ENCODE measurements at regions of chr2 and their contacts with region 1.

Region 1: DNA sequence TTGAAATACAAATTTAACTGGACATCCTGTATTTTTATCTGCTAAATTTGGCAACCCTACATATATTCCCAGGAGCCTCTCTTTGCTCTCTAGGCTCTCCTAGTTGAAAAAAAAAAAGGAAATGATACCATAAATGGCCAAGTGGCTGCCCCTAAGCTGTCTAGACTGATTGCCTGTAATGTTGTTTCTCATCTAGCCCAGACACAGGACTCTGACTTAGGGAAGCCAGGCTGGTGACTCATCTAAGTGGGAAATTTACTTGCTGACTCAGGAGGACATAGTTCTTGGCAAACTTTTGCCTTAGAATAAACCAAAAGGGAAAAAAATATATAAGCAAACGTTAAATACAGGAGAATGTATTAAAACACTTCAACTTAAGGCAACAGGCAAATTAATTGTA is 14.6 kb upstream of the ITGAV start:
- DNase-seq: peak; percentile 98
- H3K4me3 Mint-ChIP-seq: no peak overlapping the region
- H3K27ac Mint-ChIP-seq: peak overlapping the region; percentile 35
- H3K4me1 Mint-ChIP-seq: peaks cover 10% of the 10 kb centered on the region
- H3K27me3 Mint-ChIP-seq: no peaks in the 10 kb centered on the region
- CTCF ChIP-seq: no peak

Region 2: GRCh38 chr2:186429104-186429503 is 146.2 kb before region 1 on chr2:
- CTCF ChIA-PET with region 1: no interaction called
- POLR2A ChIA-PET with region 1: no interaction called
- intact Hi-C with region 1: no loop called
- DNase-seq: no peak
- H3K4me3 Mint-ChIP-seq: no peak overlapping the region
- H3K27ac Mint-ChIP-seq: no peak overlapping the region
- H3K4me1 Mint-ChIP-seq: peaks cover 10% of the 10 kb centered on the region
- H3K27me3 Mint-ChIP-seq: no peaks in the 10 kb centered on the region
- CTCF ChIP-seq: no peak

Region 3: GRCh38 chr2:186544255-186544675 is 31.0 kb before region 1 on chr2:
- CTCF ChIA-PET with region 1: interaction called, 5 read pairs
- POLR2A ChIA-PET with region 1: interaction called, 10 read pairs
- intact Hi-C with region 1: loop called (anchors 5 kb)
- DNase-seq: peak; percentile 86
- H3K4me3 Mint-ChIP-seq: peak overlapping the region; percentile 47
- H3K27ac Mint-ChIP-seq: no peak overlapping the region
- H3K4me1 Mint-ChIP-seq: no peaks in the 10 kb centered on the region
- H3K27me3 Mint-ChIP-seq: no peaks in the 10 kb centered on the region
- CTCF ChIP-seq: no peak